ENCODE measurements at regions of chr3 and their contacts with region 1.

Region 1: GRCh38 chr3:78562328-78562727 is 1205.5 kb downstream of the ROBO1 start:
- DNase-seq: peak; percentile 88
- H3K4me3 ChIP-seq: no peak overlapping the region
- H3K27ac ChIP-seq: peak overlapping the region; percentile 27
- H3K4me1 ChIP-seq: peaks cover 9% of the 10 kb centered on the region
- H3K27me3 ChIP-seq: no peaks in the 10 kb centered on the region
- CTCF ChIP-seq: no peak

Region 2: DNA sequence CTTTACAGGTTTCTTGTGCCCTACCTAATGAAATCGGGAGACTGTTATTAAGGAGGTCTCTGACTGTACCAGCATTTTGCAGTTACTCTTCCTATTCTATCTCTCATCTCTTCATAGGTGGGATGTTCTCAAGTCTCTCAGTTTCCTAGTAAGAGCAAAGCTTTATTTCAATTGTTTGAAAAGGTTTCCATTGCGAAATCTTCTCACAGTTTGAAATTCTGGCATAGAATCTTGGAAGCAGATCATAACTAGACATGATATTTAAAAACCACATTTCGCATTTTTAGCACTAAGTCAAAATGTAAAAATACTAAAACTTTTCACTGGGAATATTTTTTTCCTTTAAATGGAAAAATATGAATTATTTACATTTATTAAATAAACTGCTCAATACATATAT is 211.0 kb before region 1 on chr3:
- CTCF ChIA-PET with region 1: no interaction called
- POLR2A ChIA-PET with region 1: no interaction called
- intact Hi-C with region 1: loop called (anchors 5 kb)
- DNase-seq: no peak
- H3K4me3 ChIP-seq: no peak overlapping the region
- H3K27ac ChIP-seq: no peak overlapping the region
- H3K4me1 ChIP-seq: peaks cover 56% of the 10 kb centered on the region
- H3K27me3 ChIP-seq: no peaks in the 10 kb centered on the region
- CTCF ChIP-seq: no peak

Region 3: GRCh38 chr3:78754066-78754743 is 191.9 kb after region 1 on chr3:
- CTCF ChIA-PET with region 1: no interaction called
- POLR2A ChIA-PET with region 1: no interaction called
- intact Hi-C with region 1: no loop called
- DNase-seq: no peak
- H3K4me3 ChIP-seq: no peak overlapping the region
- H3K27ac ChIP-seq: no peak overlapping the region
- H3K4me1 ChIP-seq: peaks cover 20% of the 10 kb centered on the region
- H3K27me3 ChIP-seq: no peaks in the 10 kb centered on the region
- CTCF ChIP-seq: no peak

Region 4: GRCh38 chr3:78887547-78888011 is 325.3 kb after region 1 on chr3:
- CTCF ChIA-PET with region 1: no interaction called
- POLR2A ChIA-PET with region 1: no interaction called
- intact Hi-C with region 1: no loop called
- DNase-seq: no peak
- H3K4me3 ChIP-seq: peak overlapping the region; percentile 15
- H3K27ac ChIP-seq: peak overlapping the region; percentile 57
- H3K4me1 ChIP-seq: peaks cover 34% of the 10 kb centered on the region
- H3K27me3 ChIP-seq: no peaks in the 10 kb centered on the region
- CTCF ChIP-seq: no peak

Measured in A673 (cell line).